Posterior vena cava (tissue), 2 donors: ENCODE measurements at regions of chr7 and their contacts with region 1.

Region 1: DNA sequence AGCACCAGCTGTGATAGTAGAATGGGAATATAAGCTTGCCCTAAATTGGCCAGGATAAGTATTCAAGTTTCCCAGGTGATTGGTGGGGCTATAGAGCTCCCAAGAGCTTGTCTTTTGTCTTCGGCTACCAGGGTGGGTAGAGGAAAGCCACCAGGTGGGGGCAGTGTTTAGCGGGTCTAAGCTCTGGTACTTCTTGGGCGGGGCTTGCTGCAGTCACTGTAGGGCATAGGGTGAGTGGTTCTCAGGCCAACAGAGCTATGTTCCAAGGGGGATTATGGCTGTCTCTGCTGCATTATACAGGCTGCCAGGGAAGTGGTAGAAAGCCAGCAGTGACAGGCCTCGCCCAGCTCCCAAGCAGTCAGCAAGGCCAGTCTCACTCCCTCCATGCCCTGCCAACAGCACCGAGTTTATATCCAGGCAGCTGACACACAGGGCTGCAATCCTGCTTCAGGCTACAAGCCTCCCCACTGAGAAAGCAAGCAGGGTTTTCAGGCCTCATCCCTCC is 110.7 kb downstream of the ZNF467 start:
- DNase-seq: no peak

Region 2: DNA sequence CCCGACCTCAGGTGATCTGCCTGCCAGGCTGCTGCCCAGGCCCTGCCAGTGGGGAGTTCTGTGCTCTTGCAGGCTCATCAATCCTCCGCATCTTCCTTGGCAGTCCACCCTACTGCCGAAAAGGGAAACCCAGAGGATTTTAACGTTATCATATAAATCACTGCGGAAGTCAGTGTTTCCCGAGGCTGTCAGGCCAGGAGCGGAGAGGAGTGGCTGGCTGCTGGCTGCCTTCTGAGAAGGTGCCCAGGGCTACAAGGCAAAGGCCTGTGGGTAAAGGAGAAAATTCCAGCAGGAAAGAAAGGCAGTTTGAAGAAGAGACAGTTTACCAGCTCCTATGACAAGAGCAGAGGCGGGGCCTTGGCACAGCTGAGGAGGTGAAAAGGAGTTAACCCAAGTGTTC is 60.3 kb before region 1 on chr7:
- intact Hi-C with region 1: loop called in 1 of 2 experiments (anchors 2 kb)
- DNase-seq: no peak